ENCODE measurements at regions of chr22 and their contacts with region 1.

Region 1: GRCh38 chr22:25702040-25702439 is 39.9 kb upstream of the MYO18B start:
- DNase-seq: no peak
- H3K4me3 Mint-ChIP-seq: no peak overlapping the region
- H3K27ac Mint-ChIP-seq: no peak overlapping the region
- H3K4me1 Mint-ChIP-seq: no peaks in the 10 kb centered on the region
- H3K27me3 Mint-ChIP-seq: no peaks in the 10 kb centered on the region
- CTCF ChIP-seq: no peak

Region 2: DNA sequence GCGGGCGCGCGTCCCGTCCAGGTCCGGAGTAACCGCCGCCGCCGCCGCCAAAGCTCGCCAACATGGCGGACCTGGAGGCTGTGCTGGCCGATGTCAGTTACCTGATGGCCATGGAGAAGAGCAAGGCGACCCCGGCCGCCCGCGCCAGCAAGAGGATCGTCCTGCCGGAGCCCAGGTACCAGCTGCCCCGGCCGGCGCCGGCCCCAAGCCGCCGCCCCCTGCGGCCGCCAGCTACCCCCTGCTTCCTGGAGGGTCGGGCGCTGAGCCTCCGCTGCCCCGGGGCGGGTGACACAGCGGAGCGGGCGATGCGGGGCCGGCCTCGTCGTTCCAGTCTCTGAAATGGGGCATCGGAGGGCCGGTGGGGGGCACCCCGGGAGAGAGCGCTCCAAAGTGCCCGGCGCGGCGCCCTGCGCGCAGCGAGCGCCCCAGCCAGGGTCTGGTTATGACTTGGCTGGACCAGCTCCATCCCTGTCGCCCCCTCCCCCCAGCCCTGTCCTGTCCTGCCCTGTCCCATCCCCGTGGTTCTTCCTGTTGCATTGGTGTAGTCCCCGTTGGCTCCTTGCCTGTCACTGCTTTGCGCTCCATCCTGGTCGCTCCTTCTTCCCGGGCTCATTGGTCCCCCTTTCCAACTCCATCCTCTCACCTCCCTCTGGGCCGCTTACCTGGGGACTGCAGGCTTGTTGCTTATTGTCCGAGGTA is 136.9 kb before region 1 on chr22:
- CTCF ChIA-PET with region 1: no interaction called
- intact Hi-C with region 1: loop called (anchors 5 kb)
- DNase-seq: peak; percentile 39
- H3K4me3 Mint-ChIP-seq: peak overlapping the region; percentile 89
- H3K27ac Mint-ChIP-seq: peak overlapping the region; percentile 85
- H3K4me1 Mint-ChIP-seq: peaks cover 24% of the 10 kb centered on the region
- H3K27me3 Mint-ChIP-seq: peaks cover 37% of the 10 kb centered on the region
- CTCF ChIP-seq: no peak

Region 3: DNA sequence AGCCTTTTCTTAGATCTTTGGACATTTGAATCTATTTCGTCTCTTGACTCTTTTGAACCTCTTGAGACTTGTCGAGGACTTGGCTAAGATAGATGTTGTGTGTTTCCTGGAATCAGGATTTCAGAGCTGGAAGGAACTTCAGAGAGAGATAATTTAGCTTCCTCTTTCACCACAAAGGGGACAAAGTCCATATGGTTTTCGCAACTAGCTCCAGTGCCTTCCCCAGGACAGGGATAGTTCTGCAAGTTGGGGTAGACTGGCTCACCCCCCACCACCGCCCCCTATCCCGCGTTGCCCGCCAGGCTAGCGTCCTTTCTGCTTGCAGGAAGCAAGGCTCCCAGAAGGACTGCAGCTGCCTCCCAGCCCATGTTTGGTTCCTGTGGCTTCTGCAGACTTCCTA is 35.7 kb before region 1 on chr22:
- CTCF ChIA-PET with region 1: no interaction called
- intact Hi-C with region 1: no loop called
- DNase-seq: no peak
- H3K4me3 Mint-ChIP-seq: no peak overlapping the region
- H3K27ac Mint-ChIP-seq: no peak overlapping the region
- H3K4me1 Mint-ChIP-seq: no peaks in the 10 kb centered on the region
- H3K27me3 Mint-ChIP-seq: no peaks in the 10 kb centered on the region
- CTCF ChIP-seq: no peak

Region 4: DNA sequence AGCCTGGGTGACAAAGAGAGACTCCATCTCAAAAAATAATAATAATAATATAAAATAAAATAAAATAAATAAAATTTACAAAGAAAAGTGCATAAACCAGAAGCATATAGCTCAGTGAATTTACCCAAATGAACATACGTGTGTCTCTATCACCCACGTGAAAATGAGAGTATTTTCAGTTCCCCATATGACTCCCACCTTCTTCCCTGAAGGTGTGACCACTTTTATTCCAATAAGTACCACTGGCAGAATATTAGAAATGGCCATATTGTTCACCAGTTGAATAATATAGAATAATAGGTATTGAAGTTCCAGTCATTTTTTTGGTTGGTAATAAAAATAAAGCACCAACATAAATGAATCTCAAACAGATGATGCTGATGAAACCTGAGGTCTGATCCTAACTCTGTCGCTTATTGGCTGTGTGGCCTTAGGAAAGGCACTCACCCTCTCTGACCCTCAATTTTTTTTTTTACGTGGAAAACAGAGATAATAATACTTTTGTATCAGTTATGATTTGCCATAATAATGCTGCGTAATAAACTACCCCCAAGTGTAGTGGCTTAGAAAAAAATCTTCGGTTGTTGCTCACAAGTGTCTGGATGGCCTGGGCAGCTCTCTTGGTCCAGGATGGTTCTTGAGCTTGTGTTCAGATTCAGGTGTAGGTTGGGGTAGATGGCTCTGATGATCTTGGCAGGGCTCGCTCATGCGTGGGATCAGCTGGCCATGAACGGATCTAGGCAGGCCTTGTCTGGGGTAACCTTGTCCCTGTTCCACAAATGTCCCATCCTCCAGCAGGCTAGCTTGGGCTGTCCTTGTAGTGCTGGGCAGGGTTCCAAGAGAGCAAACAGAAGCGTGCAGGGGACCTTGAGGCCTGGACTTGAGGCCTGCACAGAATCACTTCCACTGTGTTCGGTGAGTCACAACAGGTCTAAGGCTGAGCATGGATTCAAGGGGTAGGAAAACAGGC is 128.1 kb after region 1 on chr22:
- CTCF ChIA-PET with region 1: no interaction called
- intact Hi-C with region 1: no loop called
- DNase-seq: no peak
- H3K4me3 Mint-ChIP-seq: no peak overlapping the region
- H3K27ac Mint-ChIP-seq: no peak overlapping the region
- H3K4me1 Mint-ChIP-seq: no peaks in the 10 kb centered on the region
- H3K27me3 Mint-ChIP-seq: peaks cover 79% of the 10 kb centered on the region
- CTCF ChIP-seq: no peak